ENCODE measurements at regions of chr9 and their contacts with region 1.

Region 1: GRCh38 chr9:35096035-35096849 is at the start of gene PIGO:
- DNase-seq: peak; percentile 77 to 91 (median 90)
- H3K4me3 ChIP-seq: peak within 1 kb of the TSS; percentile 72 to 100 (median 93)
- H3K27ac ChIP-seq: peak within 1 kb of the TSS; percentile 85 to 99 (median 96)
- H3K27me3 ChIP-seq: no peaks in the 10 kb centered on the region
- CTCF ChIP-seq: peak; percentile 52 to 92 (median 76)
- total RNA-seq, gene PIGO: 14.1 to 39.9 (median 22.4) TPM

Region 2: GRCh38 chr9:34759432-34760134 is 336.7 kb before region 1 on chr9:
- intact Hi-C with region 1: loop called in 1 of 2 experiments (anchors 5 kb)
- DNase-seq: peak in 6 of 10 donors; percentile 30 to 65 (median 44)
- H3K4me3 ChIP-seq: peak overlapping the region in 2 of 59 donors; percentile 10 to 32
- H3K27ac ChIP-seq: peak overlapping the region in 24 of 59 donors; percentile 6 to 77 (median 47)
- H3K27me3 ChIP-seq: peaks cover 0 to 3% (median 0%) of the 10 kb centered on the region in 45 donors
- CTCF ChIP-seq: peak in 4 of 56 donors; percentile 7 to 12 (median 10)

Region 3: GRCh38 chr9:34989003-34989945 is 107.0 kb before region 1 on chr9 and contains the start of gene DNAJB5:
- intact Hi-C with region 1: loop called (anchors 5 kb)
- DNase-seq: peak; percentile 99 to 100 (median 100)
- H3K4me3 ChIP-seq: peak within 1 kb of the TSS; percentile 64 to 98 (median 85)
- H3K27ac ChIP-seq: peak within 1 kb of the TSS; percentile 80 to 99 (median 93)
- H3K27me3 ChIP-seq: no peaks in the 10 kb centered on the region
- CTCF ChIP-seq: peak in 20 of 56 donors; percentile 5 to 62 (median 26)
- total RNA-seq, gene DNAJB5: 7.7 to 33.7 (median 13.4) TPM

Region 4: GRCh38 chr9:35079426-35080341 is 16.6 kb before region 1 on chr9 and contains the start of gene FANCG:
- intact Hi-C with region 1: loop called in 1 of 2 experiments (anchors 2 kb)
- DNase-seq: peak; percentile 80 to 96 (median 91)
- H3K4me3 ChIP-seq: peak within 1 kb of the TSS; percentile 44 to 98 (median 78)
- H3K27ac ChIP-seq: peak within 1 kb of the TSS in 56 of 59 donors; percentile 12 to 90 (median 78)
- H3K27me3 ChIP-seq: no peaks in the 10 kb centered on the region
- CTCF ChIP-seq: peak in 47 of 56 donors; percentile 1 to 69 (median 39)
- total RNA-seq, gene FANCG: 12.2 to 38.6 (median 22.1) TPM

Measured in dorsolateral prefrontal cortex (tissue), 120 donors.